ENCODE measurements at regions of chr1 and their contacts with region 1.

Region 1: GRCh38 chr1:176073524-176074157 is 133.4 kb downstream of the COP1 start:
- DNase-seq: peak in 1 of 10 donors; percentile 45

Region 2: DNA sequence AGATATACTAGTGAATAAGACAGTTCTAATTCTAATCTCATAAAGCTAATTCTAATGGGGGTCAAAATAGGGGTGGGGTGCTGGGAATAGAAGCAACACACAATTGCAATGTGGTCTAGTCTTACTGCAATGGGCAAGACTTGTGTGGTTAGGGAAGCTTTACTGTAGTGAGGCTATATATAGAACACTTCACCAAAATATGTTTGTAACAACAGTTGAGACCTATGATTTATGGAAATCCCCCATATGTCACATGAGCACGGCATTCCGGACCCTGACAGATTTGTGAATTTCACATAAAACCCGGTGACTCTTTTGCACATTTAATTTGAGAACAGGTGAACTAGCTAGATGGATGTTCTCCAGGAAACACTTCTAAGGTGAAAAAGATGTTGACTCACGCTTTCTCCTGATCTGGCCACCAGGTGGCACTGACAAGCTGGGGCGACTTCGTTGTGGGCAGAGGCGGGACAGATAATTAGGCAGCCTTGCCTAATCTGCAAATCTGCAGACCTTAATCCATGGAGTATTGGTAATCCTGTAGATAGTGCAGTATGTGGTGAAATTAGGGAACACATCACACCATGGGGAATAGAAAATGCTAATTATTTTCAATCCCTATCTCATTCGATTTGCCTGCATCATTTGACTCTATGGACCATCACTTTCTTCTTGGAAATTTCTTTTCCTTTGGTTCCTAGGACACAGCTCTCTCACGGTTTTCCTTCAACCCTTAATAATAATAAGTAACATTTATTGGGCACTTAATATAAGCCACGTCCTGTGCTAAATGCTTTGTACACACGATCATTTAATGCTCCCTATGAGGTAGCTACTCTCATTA is 918.8 kb before region 1 on chr1:
- intact Hi-C with region 1: loop called (anchors 2 kb)
- DNase-seq: peak in 9 of 10 donors; percentile 46 to 93 (median 70)

Region 3: DNA sequence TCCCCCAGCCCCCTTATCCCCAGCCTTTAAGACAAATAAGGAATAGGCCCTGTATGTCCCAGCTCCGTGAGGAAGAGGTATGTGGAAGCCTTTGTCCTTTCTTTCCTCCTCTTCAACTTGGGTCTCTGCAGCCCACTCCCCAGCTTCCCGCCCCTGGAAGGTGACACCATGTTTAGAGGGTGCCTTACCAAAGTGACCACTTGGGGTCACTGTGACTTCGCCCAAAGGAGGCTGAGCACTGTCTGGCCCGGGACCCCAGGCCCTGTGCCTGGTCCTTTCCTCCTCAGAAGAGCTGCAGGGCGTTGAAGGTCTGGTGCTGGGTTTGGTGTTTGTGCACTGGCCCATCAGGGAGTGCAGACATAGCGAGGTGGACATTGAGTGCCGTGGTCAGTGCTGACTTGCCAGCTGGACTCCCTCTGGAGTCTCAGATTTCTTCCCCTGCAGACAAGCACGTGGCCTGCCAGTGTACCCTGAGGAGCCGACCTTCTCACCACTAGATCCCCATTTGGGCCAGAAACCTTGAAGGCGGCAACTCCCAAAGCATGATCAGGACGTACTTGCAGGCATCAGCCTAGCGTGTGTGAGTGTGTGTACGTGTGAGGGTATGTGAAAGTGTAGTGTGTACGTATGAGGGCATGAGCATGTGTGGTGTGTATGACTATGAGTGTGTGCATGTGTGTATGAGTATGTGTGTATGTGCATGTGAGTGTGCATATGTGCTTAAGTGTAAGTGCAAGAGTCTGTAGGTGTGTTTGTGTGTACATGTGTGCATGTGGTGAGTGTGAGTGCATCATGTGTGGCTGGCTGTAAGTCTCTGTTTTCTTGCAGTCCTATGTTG is 699.6 kb before region 1 on chr1:
- intact Hi-C with region 1: loop called (anchors 5 kb)
- DNase-seq: peak in 7 of 10 donors; percentile 17 to 88 (median 48)

Region 4: GRCh38 chr1:175479521-175480342 is 593.9 kb before region 1 on chr1:
- intact Hi-C with region 1: loop called (anchors 2 kb)
- DNase-seq: no peak

Region 5: GRCh38 chr1:175742790-175743459 is 330.7 kb before region 1 on chr1:
- intact Hi-C with region 1: loop called (anchors 10 kb)
- DNase-seq: peak in 7 of 10 donors; percentile 36 to 91 (median 45)

Region 6: DNA sequence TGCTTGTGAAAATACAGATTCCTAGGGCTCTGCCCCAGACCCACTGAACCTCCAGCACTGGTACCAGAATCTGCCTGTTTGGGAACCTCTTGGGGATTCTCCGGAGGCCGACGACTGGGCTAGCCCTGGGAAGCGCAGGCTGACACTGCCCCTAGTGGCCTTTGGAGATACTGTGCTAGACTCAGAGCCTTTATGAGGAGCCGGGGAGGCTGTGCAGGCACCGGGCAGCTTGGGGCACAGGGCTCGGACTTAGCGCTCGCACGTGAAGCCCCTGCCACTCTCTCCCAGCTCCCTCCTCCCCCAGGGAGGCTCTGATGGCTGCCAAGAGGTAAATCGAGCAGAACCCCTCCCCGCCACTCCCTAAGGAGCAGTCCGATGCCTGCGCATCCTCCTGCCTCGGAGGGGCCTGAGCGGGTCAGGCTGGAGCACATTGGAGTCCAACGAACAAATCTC is 185.6 kb before region 1 on chr1:
- intact Hi-C with region 1: loop called (anchors 5 kb)
- DNase-seq: peak; percentile 61 to 98 (median 82)

Region 7: GRCh38 chr1:176136891-176137290 is 63.2 kb after region 1 on chr1:
- intact Hi-C with region 1: loop called (anchors 10 kb)
- DNase-seq: no peak